Panc1 (cell line): ENCODE measurements at regions of chr19 and their contacts with region 1.

Region 1: GRCh38 chr19:7562646-7563393 is 27.3 kb downstream of the PNPLA6 start:
- DNase-seq: no peak
- ATAC-seq: no peak
- H3K4me3 ChIP-seq: no peak overlapping the region
- H3K27ac ChIP-seq: no peak overlapping the region
- H3K4me1 ChIP-seq: no peaks in the 10 kb centered on the region
- H3K27me3 ChIP-seq: no peaks in the 10 kb centered on the region
- CTCF ChIP-seq: no peak

Region 2: DNA sequence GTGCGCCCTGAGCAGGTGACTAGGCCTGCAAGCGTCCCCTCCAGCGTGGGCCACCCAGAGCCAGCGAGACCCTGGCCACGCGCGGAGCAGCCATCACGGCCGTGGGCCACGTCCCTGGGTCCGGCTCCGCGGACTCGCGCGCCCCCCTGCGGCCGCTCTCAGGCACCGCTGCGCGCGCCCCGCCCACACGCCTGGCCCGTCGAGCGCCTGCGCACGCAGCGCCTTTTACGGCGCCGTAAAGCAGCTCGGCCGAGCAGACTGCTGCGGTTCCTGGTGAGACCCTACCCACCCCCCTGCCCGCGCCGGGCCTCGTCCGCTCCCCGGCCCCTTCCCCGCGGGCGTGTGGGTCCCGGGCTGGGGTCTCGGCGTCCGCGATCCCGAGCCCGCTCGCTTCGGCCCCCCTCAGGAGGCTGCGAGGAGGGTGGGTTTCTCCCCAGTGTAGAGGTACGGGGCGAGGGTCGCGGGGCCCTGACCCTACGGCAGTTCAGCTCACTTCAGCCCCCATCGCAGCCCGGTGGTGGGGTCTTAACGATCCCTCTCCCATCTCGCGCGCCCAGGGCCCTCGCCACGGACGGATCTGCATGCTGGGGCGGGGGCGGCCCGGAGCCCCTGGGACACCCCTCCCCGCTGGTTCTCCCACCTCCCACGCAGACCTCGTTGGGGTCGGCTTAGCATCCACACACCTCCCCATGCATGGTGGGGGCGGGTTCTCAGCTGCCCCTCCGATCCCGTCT is 118.0 kb after region 1 on chr19 and contains the start of gene TRAPPC5:
- CTCF ChIA-PET with region 1: interaction called, 12 read pairs
- POLR2A ChIA-PET with region 1: no interaction called
- in situ Hi-C with region 1: no loop called
- intact Hi-C with region 1: loop called (anchors 5 kb)
- DNase-seq: no peak
- ATAC-seq: peak; percentile 85
- H3K4me3 ChIP-seq: peak within 1 kb of the TSS; percentile 67 to 85
- H3K27ac ChIP-seq: peak within 1 kb of the TSS; percentile 69
- H3K4me1 ChIP-seq: no peaks in the 10 kb centered on the region; the same call in 1 of the 2 replicates
- H3K27me3 ChIP-seq: no peaks in the 10 kb centered on the region
- CTCF ChIP-seq: peak; percentile 97
- total RNA-seq, gene TRAPPC5: 101 TPM